ENCODE measurements at regions of chr17 and their contacts with region 1.

Region 1: GRCh38 chr17:51371732-51372151 is 111.4 kb downstream of the UTP18 start:
- DNase-seq: peak; percentile 43 to 97 (median 74)

Region 2: GRCh38 chr17:51461578-51462004 is 89.8 kb after region 1 on chr17:
- intact Hi-C with region 1: no loop called
- DNase-seq: peak; percentile 19 to 91 (median 38)

Region 3: DNA sequence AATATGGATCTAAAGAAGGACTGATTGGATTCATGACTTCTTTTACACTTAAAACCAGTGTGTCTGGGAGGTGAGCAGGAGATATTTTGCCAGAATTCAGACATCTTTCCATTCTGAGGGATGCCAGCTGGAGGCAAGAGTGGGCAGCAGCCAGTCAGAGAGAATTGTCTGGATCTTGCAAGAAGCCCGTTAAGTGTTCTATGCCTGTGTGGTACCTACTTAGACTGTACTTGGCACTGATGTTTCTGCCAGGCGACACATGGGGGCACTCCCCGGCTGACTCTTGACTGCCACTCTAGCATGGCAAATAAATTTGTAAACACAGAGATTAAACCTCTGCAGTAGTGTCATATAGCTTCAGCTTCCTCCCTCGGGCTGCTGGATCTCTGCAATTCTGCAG is 136.3 kb after region 1 on chr17:
- intact Hi-C with region 1: loop called (anchors 10 kb)
- DNase-seq: peak in 8 of 10 donors; percentile 19 to 92 (median 40)

Region 4: GRCh38 chr17:51540151-51540550 is 168.4 kb after region 1 on chr17:
- intact Hi-C with region 1: loop called (anchors 1 kb)
- DNase-seq: peak in 8 of 10 donors; percentile 31 to 91 (median 67)

Region 5: GRCh38 chr17:51590066-51590656 is 218.4 kb after region 1 on chr17:
- intact Hi-C with region 1: loop called (anchors 5 kb)
- DNase-seq: no peak

Region 6: DNA sequence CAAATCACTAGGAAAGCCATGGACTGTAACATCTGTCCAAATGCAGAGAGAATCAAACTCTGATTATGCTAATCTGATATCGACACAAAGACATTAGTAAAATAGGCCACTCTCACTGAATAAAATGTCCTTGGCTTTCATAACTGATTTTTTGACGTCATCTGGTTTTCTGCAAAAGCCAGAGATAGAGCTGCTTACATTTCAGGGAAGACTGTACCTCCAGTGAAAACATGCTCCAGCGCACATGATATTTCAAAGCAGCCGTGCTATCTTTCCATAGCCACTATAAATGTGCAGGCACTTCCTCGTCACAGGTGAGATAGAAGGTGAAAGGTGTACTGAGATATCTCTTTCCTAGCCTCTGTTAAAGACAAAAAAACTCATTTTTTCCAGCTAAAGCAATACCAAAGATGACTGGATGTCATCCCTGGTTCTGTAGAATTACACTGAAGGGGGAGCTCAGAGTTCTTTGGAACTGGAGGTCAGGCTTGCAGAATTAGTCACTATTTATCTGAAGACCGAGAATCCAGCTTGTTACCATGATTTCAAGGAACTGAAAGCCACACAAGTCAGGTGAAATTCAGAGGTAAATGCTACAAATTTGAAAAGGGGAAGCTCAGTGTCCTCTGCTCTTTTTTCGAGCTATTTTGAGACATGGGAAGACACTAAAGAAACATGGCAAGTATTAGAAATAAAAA is 537.2 kb after region 1 on chr17:
- intact Hi-C with region 1: no loop called
- DNase-seq: no peak

Region 7: DNA sequence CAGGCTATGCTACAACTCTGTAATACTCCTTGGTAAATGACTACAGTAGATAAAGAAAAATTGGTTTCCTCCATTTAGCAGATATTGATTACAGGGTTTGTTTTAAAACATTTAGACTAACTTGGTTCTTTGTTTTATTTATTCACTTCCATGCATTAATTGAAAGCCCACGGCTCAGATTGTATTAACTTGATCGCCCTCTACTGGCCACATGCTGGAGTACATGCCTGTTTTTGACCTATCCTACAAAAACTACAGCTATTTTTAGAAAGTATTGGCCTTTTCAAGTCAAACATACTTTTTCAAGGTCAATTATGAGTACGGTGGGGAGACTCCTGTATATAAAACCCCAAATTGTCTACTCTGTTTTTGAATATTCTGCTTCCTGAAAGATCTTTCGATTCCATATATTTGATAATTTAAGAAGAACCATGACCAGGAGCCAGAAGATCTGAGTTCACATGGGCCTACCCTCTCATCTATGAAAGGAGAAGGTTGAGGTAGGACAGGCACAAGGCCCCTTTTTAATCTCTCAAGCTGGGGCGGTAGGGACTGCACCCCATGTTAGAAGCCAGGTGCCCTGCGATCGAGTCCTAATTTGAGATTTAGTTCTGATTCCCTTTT is 735.0 kb after region 1 on chr17:
- intact Hi-C with region 1: loop called (anchors 10 kb)
- DNase-seq: peak in 6 of 10 donors; percentile 26 to 75 (median 60)